ENCODE measurements at regions of chr16 and their contacts with region 1.

Region 1: GRCh38 chr16:23700509-23700908 is 12.5 kb downstream of the ERN2 start:
- DNase-seq: peak in 1 of 2 experiments; percentile 75
- H3K4me3 ChIP-seq: 0 out of 8 replicates have a peak overlapping the region, but pooled peaks of 1 of the 4 experiments have one; percentile 3
- H3K27ac ChIP-seq: no peak overlapping the region
- H3K4me1 ChIP-seq: peaks cover 0 to 5% (median 3%) of the 10 kb centered on the region in 4 experiments; a peak in 5 of 7 replicates
- H3K27me3 ChIP-seq: no peaks in the 10 kb centered on the region
- CTCF ChIP-seq: no peak
- EP300 ChIP-seq: no peak
- POLR2A ChIP-seq: 0 out of 3 replicates have a peak, but pooled peaks of 1 of the 2 experiments have one; percentile 20
- RAD21 ChIP-seq: no peak; a peak in 1 of 4 replicates

Region 2: DNA sequence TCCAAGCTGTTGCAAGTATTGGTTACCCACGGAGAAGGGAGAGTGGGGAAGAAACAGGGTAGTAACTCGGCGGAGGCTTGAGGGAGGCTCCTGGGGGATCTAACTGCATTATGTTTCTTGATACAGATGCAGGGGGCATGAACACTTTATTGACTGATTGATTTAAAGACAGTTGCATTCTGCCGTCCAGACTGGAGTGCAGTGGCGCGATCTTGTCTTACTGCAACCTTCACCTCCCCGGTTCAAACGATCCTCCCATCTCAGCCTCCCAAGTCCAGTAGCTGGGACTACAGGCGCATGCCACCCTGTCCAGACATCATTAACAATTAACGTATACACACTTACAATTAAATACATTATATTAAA is 27.6 kb after region 1 on chr16:
- CTCF ChIA-PET with region 1: interaction called, 11 read pairs
- POLR2A ChIA-PET with region 1: interaction called, 8 read pairs
- DNase-seq: no peak
- H3K4me3 ChIP-seq: no peak overlapping the region
- H3K27ac ChIP-seq: no peak overlapping the region
- H3K4me1 ChIP-seq: peaks cover 0 to 2% (median 0%) of the 10 kb centered on the region in 4 experiments; a peak in 5 of 7 replicates
- H3K27me3 ChIP-seq: no peaks in the 10 kb centered on the region
- CTCF ChIP-seq: no peak
- EP300 ChIP-seq: no peak
- POLR2A ChIP-seq: no peak
- RAD21 ChIP-seq: no peak